ENCODE measurements at regions of chr15 and their contacts with region 1.

Region 1: DNA sequence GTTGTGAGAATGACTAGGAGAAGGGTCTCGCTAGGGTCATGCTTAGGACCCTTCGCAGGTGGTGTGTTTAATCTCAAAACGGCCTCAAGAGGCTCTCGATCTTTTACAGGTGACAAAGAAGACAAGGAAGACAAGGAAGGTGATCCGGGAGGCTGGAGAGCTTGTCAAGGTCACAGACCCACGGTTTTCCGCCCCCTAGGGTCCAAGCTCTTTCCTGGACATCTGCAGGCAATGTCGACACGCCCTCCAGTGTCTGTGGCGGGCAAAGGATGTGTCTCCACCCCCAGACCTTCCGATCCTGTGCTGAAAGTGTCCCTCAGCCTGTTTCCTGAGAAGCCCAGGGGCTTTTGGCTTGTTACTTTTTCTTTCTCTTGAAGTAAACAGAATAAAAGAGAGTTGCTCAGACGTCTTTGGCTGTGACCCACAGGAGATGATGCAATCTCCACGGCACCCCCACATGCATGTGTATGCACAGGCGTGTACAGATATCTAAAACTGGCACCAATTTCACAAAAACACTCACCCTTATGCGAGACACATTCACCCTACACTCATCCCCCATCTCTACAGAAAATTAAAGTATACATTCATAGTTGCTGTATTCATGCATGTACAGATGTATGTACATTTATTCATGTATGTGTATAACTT is 108.8 kb downstream of the KLF13 start:
- DNase-seq: peak; percentile 92
- ATAC-seq: peak; percentile 71
- H3K4me3 Mint-ChIP-seq: peak overlapping the region; percentile 74
- H3K27ac Mint-ChIP-seq: peak overlapping the region; percentile 99
- H3K4me1 Mint-ChIP-seq: peaks cover 83% of the 10 kb centered on the region
- H3K27me3 Mint-ChIP-seq: no peaks in the 10 kb centered on the region

Region 2: DNA sequence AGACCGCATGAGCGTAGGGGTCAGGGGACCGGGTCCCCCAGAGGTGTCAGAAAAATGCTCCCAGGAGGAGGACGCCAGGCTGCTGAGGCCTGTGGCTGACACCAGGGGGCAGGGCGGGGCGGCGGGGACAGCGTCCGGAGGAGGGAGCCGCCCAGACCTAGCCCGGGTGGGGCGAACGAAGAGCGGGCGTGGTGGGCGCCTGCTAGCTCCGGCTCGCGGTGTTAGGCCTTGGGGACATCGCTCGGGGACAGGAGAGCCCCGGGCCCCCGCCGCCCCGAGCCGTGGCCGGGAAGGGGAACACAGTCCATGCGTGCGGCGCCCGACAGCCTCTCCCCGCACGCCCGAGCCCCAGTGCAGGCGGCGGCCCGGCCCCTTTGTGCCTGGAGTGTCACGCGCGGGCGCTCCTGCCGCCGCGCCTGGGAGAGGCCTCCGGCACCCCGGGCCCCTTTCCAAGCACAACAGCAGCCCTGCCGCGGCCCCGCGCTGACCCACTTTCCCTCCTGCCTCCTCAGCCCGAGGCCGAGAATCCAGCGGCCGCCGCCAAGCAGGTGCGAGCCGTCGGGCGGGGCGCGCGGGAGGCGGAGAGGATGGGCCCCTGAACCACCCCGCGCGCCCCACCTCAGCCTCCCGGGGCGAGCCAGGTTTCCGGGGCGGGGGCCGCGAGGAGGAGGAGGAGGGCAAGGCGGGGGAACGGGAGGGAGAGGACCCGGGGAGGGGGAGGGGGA is 219.7 kb before region 1 on chr15:
- CTCF ChIA-PET with region 1: interaction called, 15 read pairs
- POLR2A ChIA-PET with region 1: interaction called, 8 read pairs
- DNase-seq: peak; percentile 89
- ATAC-seq: peak; percentile 82
- H3K4me3 Mint-ChIP-seq: peak overlapping the region; percentile 71
- H3K27ac Mint-ChIP-seq: peak overlapping the region; percentile 63
- H3K4me1 Mint-ChIP-seq: peaks cover 42% of the 10 kb centered on the region
- H3K27me3 Mint-ChIP-seq: no peaks in the 10 kb centered on the region

Region 3: GRCh38 chr15:31280046-31280830 is 155.1 kb before region 1 on chr15:
- CTCF ChIA-PET with region 1: no interaction called
- POLR2A ChIA-PET with region 1: no interaction called
- DNase-seq: peak; percentile 15
- ATAC-seq: no peak
- H3K4me3 Mint-ChIP-seq: no peak overlapping the region
- H3K27ac Mint-ChIP-seq: no peak overlapping the region
- H3K4me1 Mint-ChIP-seq: peaks cover 2% of the 10 kb centered on the region
- H3K27me3 Mint-ChIP-seq: peaks cover 6% of the 10 kb centered on the region

Region 4: DNA sequence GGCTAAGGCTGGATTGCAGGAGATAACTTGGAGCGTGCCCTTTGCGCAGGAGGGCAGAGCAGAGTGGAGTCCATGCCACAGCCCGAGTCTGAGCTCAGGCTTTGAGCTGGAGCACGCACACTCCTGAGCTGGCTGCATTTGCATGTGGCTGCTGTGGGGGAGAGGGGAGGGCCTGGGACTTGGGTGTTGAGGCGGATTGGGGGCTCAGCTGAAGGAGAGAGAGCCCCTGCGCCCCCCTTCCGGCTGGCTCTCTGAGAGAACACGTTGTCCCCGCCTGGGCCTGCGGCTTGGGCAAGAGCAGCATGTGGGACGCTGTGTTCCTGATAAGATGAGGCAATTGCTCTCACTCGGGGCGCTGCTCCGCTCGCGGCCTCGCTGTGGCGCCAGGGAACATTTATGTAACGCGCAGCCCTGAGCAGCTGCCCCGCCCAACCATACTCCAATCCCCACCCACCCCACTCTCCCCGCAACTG is 69.7 kb before region 1 on chr15:
- CTCF ChIA-PET with region 1: interaction called, 271 read pairs
- POLR2A ChIA-PET with region 1: interaction called, 92 read pairs
- DNase-seq: peak; percentile 91
- ATAC-seq: peak; percentile 63
- H3K4me3 Mint-ChIP-seq: peak overlapping the region; percentile 54
- H3K27ac Mint-ChIP-seq: peak overlapping the region; percentile 94
- H3K4me1 Mint-ChIP-seq: peaks cover 99% of the 10 kb centered on the region
- H3K27me3 Mint-ChIP-seq: no peaks in the 10 kb centered on the region

Region 5: DNA sequence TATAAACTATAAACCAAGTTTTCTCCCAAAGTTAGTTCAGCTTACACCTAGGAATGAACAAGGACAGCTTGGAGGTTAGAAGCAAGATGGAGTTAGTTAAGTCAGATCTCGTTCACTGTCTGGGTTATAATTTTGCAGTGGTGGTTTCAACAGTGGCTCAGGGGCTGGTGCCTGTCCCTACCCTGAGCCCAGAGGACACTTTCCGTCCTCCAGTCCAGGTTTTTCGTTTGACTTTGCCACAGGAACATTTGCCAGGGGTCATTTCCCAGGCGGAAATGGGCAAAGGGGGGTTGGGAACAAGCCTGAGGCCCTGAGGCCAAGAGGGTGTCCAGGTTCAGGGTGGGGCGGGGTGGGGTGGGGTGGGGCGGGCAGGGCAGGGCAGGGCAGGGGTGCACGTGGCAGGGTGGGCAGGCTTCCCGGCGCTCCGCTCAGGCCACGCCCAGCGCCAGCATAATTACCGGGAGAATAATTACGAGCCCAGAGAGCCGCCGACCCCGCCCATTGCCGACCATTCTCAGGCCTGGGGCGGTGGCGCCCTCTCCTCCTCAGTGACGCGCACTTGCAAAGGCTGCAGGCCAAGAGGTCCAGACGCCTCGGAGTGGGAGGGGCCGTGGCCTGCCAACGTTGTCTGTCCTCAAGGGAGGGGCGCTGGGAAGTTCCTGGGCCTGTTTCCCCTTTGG is 38.4 kb before region 1 on chr15:
- CTCF ChIA-PET with region 1: interaction called, 23 read pairs
- POLR2A ChIA-PET with region 1: interaction called, 46 read pairs
- DNase-seq: peak; percentile 13
- ATAC-seq: no peak
- H3K4me3 Mint-ChIP-seq: no peak overlapping the region
- H3K27ac Mint-ChIP-seq: no peak overlapping the region
- H3K4me1 Mint-ChIP-seq: peaks cover 60% of the 10 kb centered on the region
- H3K27me3 Mint-ChIP-seq: no peaks in the 10 kb centered on the region

Region 6: GRCh38 chr15:31458591-31459399 is 23.4 kb after region 1 on chr15:
- CTCF ChIA-PET with region 1: interaction called, 10 read pairs
- POLR2A ChIA-PET with region 1: interaction called, 6 read pairs
- DNase-seq: no peak
- ATAC-seq: peak; percentile 39
- H3K4me3 Mint-ChIP-seq: no peak overlapping the region
- H3K27ac Mint-ChIP-seq: no peak overlapping the region
- H3K4me1 Mint-ChIP-seq: peaks cover 11% of the 10 kb centered on the region
- H3K27me3 Mint-ChIP-seq: no peaks in the 10 kb centered on the region

Region 7: GRCh38 chr15:31540633-31541032 is 105.2 kb after region 1 on chr15:
- CTCF ChIA-PET with region 1: no interaction called
- POLR2A ChIA-PET with region 1: no interaction called
- DNase-seq: no peak
- ATAC-seq: no peak
- H3K4me3 Mint-ChIP-seq: no peak overlapping the region
- H3K27ac Mint-ChIP-seq: no peak overlapping the region
- H3K4me1 Mint-ChIP-seq: no peaks in the 10 kb centered on the region
- H3K27me3 Mint-ChIP-seq: peaks cover 49% of the 10 kb centered on the region

Region 8: DNA sequence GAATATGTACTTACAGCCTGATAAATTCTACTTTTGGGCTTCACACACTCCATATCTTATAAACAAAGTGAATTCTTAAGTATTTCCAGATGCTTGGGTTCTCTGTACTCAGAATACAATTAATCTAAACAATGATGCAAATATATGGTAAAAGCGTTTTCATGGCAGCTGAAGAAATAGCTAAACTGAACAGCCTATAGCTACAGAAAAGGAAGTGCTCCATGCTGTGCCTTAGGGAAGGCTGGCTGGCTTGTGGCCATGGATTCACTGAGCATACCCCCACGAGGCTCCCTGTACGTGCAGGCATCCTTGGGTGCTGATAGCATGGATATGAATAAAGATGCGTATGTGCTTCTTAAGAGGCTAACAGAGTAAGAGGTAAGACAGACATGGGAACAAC is 155.2 kb after region 1 on chr15:
- CTCF ChIA-PET with region 1: no interaction called
- POLR2A ChIA-PET with region 1: no interaction called
- DNase-seq: no peak
- ATAC-seq: no peak
- H3K4me3 Mint-ChIP-seq: no peak overlapping the region
- H3K27ac Mint-ChIP-seq: no peak overlapping the region
- H3K4me1 Mint-ChIP-seq: no peaks in the 10 kb centered on the region
- H3K27me3 Mint-ChIP-seq: peaks cover 4% of the 10 kb centered on the region

Region 9: GRCh38 chr15:31811641-31812040 is 376.3 kb after region 1 on chr15:
- CTCF ChIA-PET with region 1: no interaction called
- POLR2A ChIA-PET with region 1: no interaction called
- DNase-seq: no peak
- ATAC-seq: no peak
- H3K4me3 Mint-ChIP-seq: no peak overlapping the region
- H3K27ac Mint-ChIP-seq: no peak overlapping the region
- H3K4me1 Mint-ChIP-seq: no peaks in the 10 kb centered on the region
- H3K27me3 Mint-ChIP-seq: no peaks in the 10 kb centered on the region

Measured in activated CD8-positive, alpha-beta T cell treated with anti-CD3 and anti-CD28 coated beads, Interleukin-2, amount 10 ng/mL, durations not matched to agents 7 days and 5 days (primary cell).